CD8-positive, alpha-beta T cell (primary cell): ENCODE measurements at regions of chr16 and their contacts with region 1.

Region 1: GRCh38 chr16:17070882-17071592 is 399.7 kb downstream of the XYLT1 start:
- DNase-seq: peak; percentile 51 to 94 (median 74)
- ATAC-seq: peak; percentile 85
- H3K4me3 ChIP-seq: peak overlapping the region; percentile 32 to 51
- H3K4me3 Mint-ChIP-seq: peak overlapping the region; percentile 87
- H3K27ac ChIP-seq: peak overlapping the region; percentile 67 to 68
- H3K27ac Mint-ChIP-seq: peak overlapping the region; percentile 97
- H3K4me1 ChIP-seq: peaks cover 4% of the 10 kb centered on the region
- H3K4me1 Mint-ChIP-seq: peaks cover 17% of the 10 kb centered on the region
- H3K27me3 ChIP-seq: no peaks in the 10 kb centered on the region
- H3K27me3 Mint-ChIP-seq: no peaks in the 10 kb centered on the region
- CTCF ChIP-seq: no peak

Region 2: DNA sequence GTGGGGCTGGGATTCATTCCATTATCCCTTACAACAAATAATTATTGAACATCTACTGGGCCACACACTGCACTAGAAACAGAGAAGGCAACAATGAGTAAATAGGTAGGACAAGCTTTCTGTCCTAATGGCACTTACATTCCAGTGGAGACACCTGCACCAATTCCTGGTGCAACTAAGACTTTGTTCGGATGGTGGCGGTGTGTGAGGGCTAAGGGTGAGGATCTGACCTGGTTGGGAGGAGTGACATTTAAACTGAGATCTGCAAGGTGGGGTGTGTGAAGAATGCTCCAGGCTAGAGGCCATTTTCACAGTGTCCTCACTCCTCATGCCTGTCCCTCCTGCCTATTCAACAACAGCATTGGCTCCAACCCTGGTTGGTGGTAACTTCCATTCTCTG is 110.3 kb before region 1 on chr16:
- CTCF ChIA-PET with region 1: no interaction called
- POLR2A ChIA-PET with region 1: no interaction called
- intact Hi-C with region 1: no loop called
- DNase-seq: no peak
- ATAC-seq: no peak
- H3K4me3 ChIP-seq: no peak overlapping the region
- H3K4me3 Mint-ChIP-seq: no peak overlapping the region
- H3K27ac ChIP-seq: no peak overlapping the region
- H3K27ac Mint-ChIP-seq: no peak overlapping the region
- H3K4me1 ChIP-seq: no peaks in the 10 kb centered on the region
- H3K4me1 Mint-ChIP-seq: peaks cover 2% of the 10 kb centered on the region
- H3K27me3 ChIP-seq: no peaks in the 10 kb centered on the region
- H3K27me3 Mint-ChIP-seq: peaks cover 8% of the 10 kb centered on the region
- CTCF ChIP-seq: no peak

Region 3: DNA sequence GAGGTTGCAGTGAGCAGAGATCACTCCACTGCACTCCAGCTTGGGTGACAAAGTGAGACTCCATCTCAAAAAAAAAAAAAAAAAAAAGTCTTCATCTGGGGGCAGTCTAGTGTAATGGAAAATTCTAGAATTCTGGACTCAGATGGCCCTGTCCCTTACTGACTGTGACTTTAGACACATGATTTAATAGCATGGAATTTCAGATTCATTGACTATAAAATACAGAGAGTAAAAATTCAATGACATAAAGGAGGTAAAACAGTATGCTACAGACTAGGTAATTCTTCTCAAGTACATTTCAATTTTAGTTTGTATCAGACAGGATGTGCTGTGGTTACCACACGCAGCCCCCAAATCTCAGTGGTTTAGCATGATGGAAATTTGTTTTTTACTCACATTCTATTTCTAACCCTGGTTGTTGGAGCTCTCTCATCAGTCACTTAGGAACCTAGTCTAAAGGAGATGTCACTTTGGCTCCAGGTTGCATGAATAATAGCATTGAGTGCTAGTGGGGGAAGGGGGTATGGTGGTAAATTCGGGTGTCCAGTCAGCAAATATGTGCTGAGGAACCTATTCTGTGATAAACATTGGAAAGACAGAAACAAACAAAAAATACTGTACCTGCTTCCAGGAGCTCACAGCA is 44.3 kb before region 1 on chr16:
- CTCF ChIA-PET with region 1: no interaction called
- POLR2A ChIA-PET with region 1: no interaction called
- intact Hi-C with region 1: loop called in 1 of 2 experiments (anchors 5 kb)
- DNase-seq: peak in 6 of 9 experiments; percentile 30 to 74 (median 58)
- ATAC-seq: peak; percentile 84
- H3K4me3 ChIP-seq: no peak overlapping the region
- H3K4me3 Mint-ChIP-seq: peak overlapping the region; percentile 37
- H3K27ac ChIP-seq: no peak overlapping the region
- H3K27ac Mint-ChIP-seq: peak overlapping the region; percentile 85
- H3K4me1 ChIP-seq: peaks cover 32% of the 10 kb centered on the region
- H3K4me1 Mint-ChIP-seq: peaks cover 44% of the 10 kb centered on the region
- H3K27me3 ChIP-seq: no peaks in the 10 kb centered on the region
- H3K27me3 Mint-ChIP-seq: no peaks in the 10 kb centered on the region
- CTCF ChIP-seq: no peak